ENCODE measurements at regions of chr13 and their contacts with region 1.

Region 1: GRCh38 chr13:46934749-46935148 is 37.9 kb upstream of the HTR2A start:
- DNase-seq: no peak
- ATAC-seq: no peak
- H3K4me3 ChIP-seq: no peak overlapping the region
- H3K27ac ChIP-seq: no peak overlapping the region
- H3K4me1 ChIP-seq: no peaks in the 10 kb centered on the region
- H3K27me3 ChIP-seq: no peaks in the 10 kb centered on the region
- CTCF ChIP-seq: no peak
- POLR2A ChIP-seq: no peak

Region 2: GRCh38 chr13:46961719-46962118 is 27.0 kb after region 1 on chr13:
- in situ Hi-C with region 1: no loop called
- intact Hi-C with region 1: loop called (anchors 1 kb)
- DNase-seq: no peak
- ATAC-seq: no peak
- H3K4me3 ChIP-seq: no peak overlapping the region
- H3K27ac ChIP-seq: no peak overlapping the region
- H3K4me1 ChIP-seq: no peaks in the 10 kb centered on the region
- H3K27me3 ChIP-seq: no peaks in the 10 kb centered on the region
- CTCF ChIP-seq: no peak
- POLR2A ChIP-seq: no peak

Region 3: DNA sequence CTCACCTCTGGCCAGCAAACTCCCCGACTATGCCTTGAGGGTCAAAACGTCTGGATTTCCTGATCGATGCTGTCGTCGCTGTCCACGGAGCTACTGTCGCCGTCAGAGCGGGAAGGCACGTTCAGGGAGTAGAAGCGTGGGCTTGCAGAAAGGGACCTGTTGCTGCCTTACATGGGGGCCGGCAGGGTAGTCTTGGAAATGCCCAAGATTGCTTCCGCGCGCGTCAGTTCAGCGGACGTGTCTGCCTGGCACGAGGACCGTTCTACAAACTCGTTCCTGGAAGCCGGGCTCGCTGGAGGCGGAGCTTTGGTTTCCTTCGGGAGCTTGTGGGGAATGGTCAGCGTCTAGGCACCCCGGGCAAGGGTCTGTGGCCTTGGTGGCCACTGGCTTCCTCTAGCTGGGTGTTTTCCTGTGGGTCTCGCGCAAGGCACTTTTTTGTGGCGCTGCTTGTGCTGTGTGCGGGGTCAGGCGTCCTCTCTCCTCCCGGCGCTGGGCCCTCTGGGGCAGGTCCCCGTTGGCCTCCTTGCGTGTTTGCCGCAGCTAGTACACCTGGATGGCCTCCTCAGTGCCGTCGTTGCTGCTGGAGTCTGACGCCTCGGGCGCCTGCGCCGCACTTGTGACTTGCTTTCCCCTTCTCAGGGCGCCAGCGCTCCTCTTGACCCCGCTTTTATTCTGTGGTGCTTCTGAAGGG is 1384.2 kb after region 1 on chr13:
- in situ Hi-C with region 1: no loop called
- intact Hi-C with region 1: no loop called
- DNase-seq: no peak
- ATAC-seq: no peak
- H3K4me3 ChIP-seq: peak overlapping the region in 2 of 4 donors; percentile 24 to 29
- H3K27ac ChIP-seq: peak overlapping the region in 1 of 4 donors; percentile 54
- H3K4me1 ChIP-seq: no peaks in the 10 kb centered on the region
- H3K27me3 ChIP-seq: no peaks in the 10 kb centered on the region
- CTCF ChIP-seq: no peak
- POLR2A ChIP-seq: no peak

Measured in gastrocnemius medialis (tissue), 4 donors.